ENCODE measurements at regions of chr20 and their contacts with region 1.

Region 1: GRCh38 chr20:1900321-1900801 is 5.2 kb downstream of the SIRPA start:
- DNase-seq: no peak
- ATAC-seq: peak; percentile 11
- H3K4me3 Mint-ChIP-seq: no peak overlapping the region
- H3K27ac Mint-ChIP-seq: no peak overlapping the region
- H3K4me1 Mint-ChIP-seq: peaks cover 49% of the 10 kb centered on the region
- H3K27me3 Mint-ChIP-seq: no peaks in the 10 kb centered on the region
- CTCF ChIP-seq: no peak

Region 2: GRCh38 chr20:1844325-1845162 is 55.8 kb before region 1 on chr20:
- CTCF ChIA-PET with region 1: no interaction called
- POLR2A ChIA-PET with region 1: interaction called, 3 read pairs
- intact Hi-C with region 1: loop called (anchors 1 kb)
- DNase-seq: peak; percentile 61
- ATAC-seq: peak; percentile 98
- H3K4me3 Mint-ChIP-seq: peak overlapping the region; percentile 65
- H3K27ac Mint-ChIP-seq: peak overlapping the region; percentile 78
- H3K4me1 Mint-ChIP-seq: peaks cover 73% of the 10 kb centered on the region
- H3K27me3 Mint-ChIP-seq: no peaks in the 10 kb centered on the region
- CTCF ChIP-seq: no peak

Region 3: DNA sequence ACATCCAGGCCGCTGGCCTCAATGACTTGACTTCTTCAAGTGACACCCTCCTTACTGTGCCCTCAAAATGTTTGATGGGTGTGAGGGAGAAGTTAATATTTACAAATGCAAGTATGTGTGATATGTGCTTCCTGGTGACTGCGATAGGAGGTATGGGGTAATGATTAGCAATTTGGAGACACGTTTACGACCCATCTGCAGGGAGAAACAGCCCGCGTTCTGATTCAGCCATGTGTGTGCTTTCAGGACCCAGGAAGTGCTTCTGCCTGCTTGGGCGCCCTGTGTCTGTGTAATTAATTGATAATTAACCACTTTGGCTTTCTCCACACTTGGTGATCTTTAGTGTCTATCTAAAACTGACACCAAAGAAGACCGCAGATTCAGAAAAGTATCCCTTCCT is 19.9 kb after region 1 on chr20:
- CTCF ChIA-PET with region 1: no interaction called
- POLR2A ChIA-PET with region 1: no interaction called
- intact Hi-C with region 1: no loop called
- DNase-seq: no peak
- ATAC-seq: no peak
- H3K4me3 Mint-ChIP-seq: no peak overlapping the region
- H3K27ac Mint-ChIP-seq: no peak overlapping the region
- H3K4me1 Mint-ChIP-seq: no peaks in the 10 kb centered on the region
- H3K27me3 Mint-ChIP-seq: no peaks in the 10 kb centered on the region
- CTCF ChIP-seq: no peak